ENCODE measurements at regions of chr6 and their contacts with region 1.

Region 1: GRCh38 chr6:45714741-45715507 is 300.7 kb downstream of the CLIC5 start:
- DNase-seq: peak in 13 of 14 experiments; percentile 10 to 84 (median 37)
- ATAC-seq: peak; percentile 91
- H3K4me3 ChIP-seq: no peak overlapping the region
- H3K4me3 Mint-ChIP-seq: peak overlapping the region; percentile 48
- H3K27ac ChIP-seq: no peak overlapping the region
- H3K27ac Mint-ChIP-seq: peak overlapping the region; percentile 12
- H3K4me1 ChIP-seq: peaks cover 22% of the 10 kb centered on the region
- H3K4me1 Mint-ChIP-seq: peaks cover 22% of the 10 kb centered on the region
- H3K27me3 ChIP-seq: no peaks in the 10 kb centered on the region
- H3K27me3 Mint-ChIP-seq: peaks cover 5% of the 10 kb centered on the region
- CTCF ChIP-seq: peak; percentile 84

Region 2: GRCh38 chr6:44475779-44476434 is 1239.0 kb before region 1 on chr6:
- CTCF ChIA-PET with region 1: interaction called, 8 read pairs
- POLR2A ChIA-PET with region 1: interaction called, 4 read pairs
- intact Hi-C with region 1: loop called (anchors 1 kb)
- DNase-seq: peak; percentile 41 to 80 (median 62)
- ATAC-seq: peak; percentile 89
- H3K4me3 ChIP-seq: no peak overlapping the region
- H3K4me3 Mint-ChIP-seq: no peak overlapping the region
- H3K27ac ChIP-seq: no peak overlapping the region
- H3K27ac Mint-ChIP-seq: no peak overlapping the region
- H3K4me1 ChIP-seq: peaks cover 9% of the 10 kb centered on the region
- H3K4me1 Mint-ChIP-seq: peaks cover 5% of the 10 kb centered on the region
- H3K27me3 ChIP-seq: peaks cover 0 to 5% of the 10 kb centered on the region in 2 experiments
- H3K27me3 Mint-ChIP-seq: no peaks in the 10 kb centered on the region
- CTCF ChIP-seq: peak; percentile 85

Region 3: DNA sequence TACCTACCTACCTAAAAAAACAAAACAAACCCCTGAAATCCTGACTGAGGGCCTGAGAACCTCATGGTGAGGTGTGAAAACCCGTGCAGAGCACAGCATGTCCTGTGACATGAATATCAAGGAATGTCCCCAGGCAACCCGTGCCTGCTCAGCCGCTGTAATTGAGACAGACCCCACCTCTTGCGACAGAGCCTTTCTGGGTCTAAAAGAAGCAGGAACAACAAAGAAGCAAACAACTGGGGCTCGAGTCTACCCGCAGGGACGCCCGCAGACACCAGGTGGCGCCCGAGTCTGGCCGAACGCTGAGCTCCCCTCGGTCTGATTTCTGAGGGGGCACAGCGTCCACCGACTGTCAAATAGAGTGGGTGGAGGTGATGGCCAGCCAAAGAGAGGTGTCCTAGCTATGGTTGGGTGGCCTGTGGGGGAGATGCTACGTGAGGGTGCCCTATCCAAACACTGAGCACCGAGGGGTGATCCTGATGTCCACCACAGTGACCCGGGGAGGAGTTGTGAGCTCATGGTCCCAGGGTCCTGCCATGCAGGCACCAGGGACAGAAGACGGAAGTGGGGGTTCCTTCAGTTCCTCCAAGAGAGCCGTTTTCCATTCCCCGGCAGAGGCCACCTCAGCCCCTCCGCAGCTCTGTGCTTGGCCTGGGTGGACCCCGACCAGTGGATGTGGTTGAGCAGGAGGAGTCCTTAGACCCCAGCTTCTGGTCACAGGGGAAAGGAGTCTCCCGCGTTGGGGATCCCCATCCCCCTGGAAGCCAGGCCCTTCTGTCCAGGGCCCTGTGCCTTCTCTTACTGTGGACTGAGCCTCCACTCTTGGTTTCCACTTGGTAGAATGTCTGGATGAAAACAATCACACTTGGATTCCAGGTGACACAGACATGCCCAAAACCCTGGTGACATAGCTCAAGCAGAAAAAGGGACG is 1059.2 kb before region 1 on chr6:
- CTCF ChIA-PET with region 1: interaction called, 81 read pairs
- POLR2A ChIA-PET with region 1: interaction called, 14 read pairs
- intact Hi-C with region 1: loop called (anchors 1 kb)
- DNase-seq: peak; percentile 51 to 82 (median 64)
- ATAC-seq: peak; percentile 79
- H3K4me3 ChIP-seq: no peak overlapping the region
- H3K4me3 Mint-ChIP-seq: no peak overlapping the region
- H3K27ac ChIP-seq: no peak overlapping the region
- H3K27ac Mint-ChIP-seq: peak overlapping the region; percentile 51
- H3K4me1 ChIP-seq: peaks cover 10% of the 10 kb centered on the region
- H3K4me1 Mint-ChIP-seq: peaks cover 8% of the 10 kb centered on the region
- H3K27me3 ChIP-seq: peaks cover 0 to 3% of the 10 kb centered on the region in 2 experiments
- H3K27me3 Mint-ChIP-seq: peaks cover 3% of the 10 kb centered on the region
- CTCF ChIP-seq: peak; percentile 95

Region 4: GRCh38 chr6:45297320-45297719 is 417.6 kb before region 1 on chr6:
- CTCF ChIA-PET with region 1: interaction called, 3 read pairs
- POLR2A ChIA-PET with region 1: interaction called, 3 read pairs
- intact Hi-C with region 1: loop called in 1 of 2 experiments (anchors 5 kb)
- DNase-seq: no peak
- ATAC-seq: no peak
- H3K4me3 ChIP-seq: no peak overlapping the region
- H3K4me3 Mint-ChIP-seq: no peak overlapping the region
- H3K27ac ChIP-seq: no peak overlapping the region
- H3K27ac Mint-ChIP-seq: peak overlapping the region; percentile 14
- H3K4me1 ChIP-seq: no peaks in the 10 kb centered on the region
- H3K4me1 Mint-ChIP-seq: peaks cover 53% of the 10 kb centered on the region
- H3K27me3 ChIP-seq: no peaks in the 10 kb centered on the region
- H3K27me3 Mint-ChIP-seq: no peaks in the 10 kb centered on the region
- CTCF ChIP-seq: peak; percentile 44

Region 5: GRCh38 chr6:45703041-45703739 is 11.7 kb before region 1 on chr6:
- CTCF ChIA-PET with region 1: interaction called, 17 read pairs
- POLR2A ChIA-PET with region 1: interaction called, 3 read pairs
- intact Hi-C with region 1: no loop called
- DNase-seq: no peak
- ATAC-seq: no peak
- H3K4me3 ChIP-seq: no peak overlapping the region
- H3K4me3 Mint-ChIP-seq: no peak overlapping the region
- H3K27ac ChIP-seq: no peak overlapping the region
- H3K27ac Mint-ChIP-seq: no peak overlapping the region
- H3K4me1 ChIP-seq: peaks cover 10% of the 10 kb centered on the region
- H3K4me1 Mint-ChIP-seq: no peaks in the 10 kb centered on the region
- H3K27me3 ChIP-seq: no peaks in the 10 kb centered on the region
- H3K27me3 Mint-ChIP-seq: no peaks in the 10 kb centered on the region
- CTCF ChIP-seq: no peak

Region 6: DNA sequence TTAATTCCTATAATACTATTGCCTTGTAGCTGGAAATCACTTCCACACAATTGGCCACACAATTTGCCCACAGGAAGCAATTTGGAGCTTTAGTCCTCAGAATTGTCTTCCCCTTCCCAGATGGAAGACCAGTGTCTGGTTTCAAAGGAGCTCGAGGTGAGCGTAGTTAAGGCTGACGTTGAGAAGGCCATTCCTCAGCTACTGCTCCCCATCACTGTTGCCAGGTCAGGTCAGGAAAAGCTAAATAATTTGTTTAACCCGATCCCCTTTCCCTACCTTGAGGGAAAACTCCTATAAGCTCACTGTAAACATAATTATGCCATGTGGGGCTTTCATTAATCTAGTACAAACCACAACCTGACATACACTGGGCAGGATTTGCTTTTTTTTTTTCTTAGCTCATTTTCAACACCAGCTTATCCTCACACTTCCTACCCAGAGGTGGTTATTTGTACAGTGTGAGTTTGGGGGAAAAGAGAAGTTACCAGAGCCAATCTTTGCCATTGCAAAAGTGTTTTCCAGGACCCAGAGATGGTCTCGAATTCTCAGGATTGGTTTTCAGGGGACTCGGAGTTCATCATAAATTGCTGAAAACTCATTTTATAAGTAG is 58.1 kb after region 1 on chr6:
- CTCF ChIA-PET with region 1: no interaction called
- POLR2A ChIA-PET with region 1: no interaction called
- intact Hi-C with region 1: no loop called
- DNase-seq: no peak
- ATAC-seq: no peak
- H3K4me3 ChIP-seq: no peak overlapping the region
- H3K4me3 Mint-ChIP-seq: no peak overlapping the region
- H3K27ac ChIP-seq: no peak overlapping the region
- H3K27ac Mint-ChIP-seq: no peak overlapping the region
- H3K4me1 ChIP-seq: no peaks in the 10 kb centered on the region
- H3K4me1 Mint-ChIP-seq: no peaks in the 10 kb centered on the region
- H3K27me3 ChIP-seq: no peaks in the 10 kb centered on the region
- H3K27me3 Mint-ChIP-seq: no peaks in the 10 kb centered on the region
- CTCF ChIP-seq: no peak

Measured in CD4-positive, alpha-beta T cell (primary cell).